Mammary epithelial cell (primary cell): ENCODE measurements at regions of chr1 and their contacts with region 1.

Region 1: GRCh38 chr1:208177656-208178055 is 66.5 kb downstream of the PLXNA2 start:
- DNase-seq: peak; percentile 36
- H3K4me3 ChIP-seq: no peak overlapping the region
- H3K27ac ChIP-seq: no peak overlapping the region
- H3K4me1 ChIP-seq: peaks cover 17% of the 10 kb centered on the region
- H3K27me3 ChIP-seq: no peaks in the 10 kb centered on the region
- CTCF ChIP-seq: no peak

Region 2: GRCh38 chr1:208165659-208166058 is 12.0 kb before region 1 on chr1:
- CTCF ChIA-PET with region 1: no interaction called
- dilution Hi-C with region 1: no loop called
- in situ Hi-C with region 1: no loop called
- intact Hi-C with region 1: loop called (anchors 1 kb)
- DNase-seq: peak; percentile 11
- H3K4me3 ChIP-seq: no peak overlapping the region
- H3K27ac ChIP-seq: peak overlapping the region; percentile 64
- H3K4me1 ChIP-seq: peaks cover 23% of the 10 kb centered on the region
- H3K27me3 ChIP-seq: no peaks in the 10 kb centered on the region
- CTCF ChIP-seq: no peak